GM12878 (cell line): ENCODE measurements at regions of chr17 and their contacts with region 1.

Region 1: DNA sequence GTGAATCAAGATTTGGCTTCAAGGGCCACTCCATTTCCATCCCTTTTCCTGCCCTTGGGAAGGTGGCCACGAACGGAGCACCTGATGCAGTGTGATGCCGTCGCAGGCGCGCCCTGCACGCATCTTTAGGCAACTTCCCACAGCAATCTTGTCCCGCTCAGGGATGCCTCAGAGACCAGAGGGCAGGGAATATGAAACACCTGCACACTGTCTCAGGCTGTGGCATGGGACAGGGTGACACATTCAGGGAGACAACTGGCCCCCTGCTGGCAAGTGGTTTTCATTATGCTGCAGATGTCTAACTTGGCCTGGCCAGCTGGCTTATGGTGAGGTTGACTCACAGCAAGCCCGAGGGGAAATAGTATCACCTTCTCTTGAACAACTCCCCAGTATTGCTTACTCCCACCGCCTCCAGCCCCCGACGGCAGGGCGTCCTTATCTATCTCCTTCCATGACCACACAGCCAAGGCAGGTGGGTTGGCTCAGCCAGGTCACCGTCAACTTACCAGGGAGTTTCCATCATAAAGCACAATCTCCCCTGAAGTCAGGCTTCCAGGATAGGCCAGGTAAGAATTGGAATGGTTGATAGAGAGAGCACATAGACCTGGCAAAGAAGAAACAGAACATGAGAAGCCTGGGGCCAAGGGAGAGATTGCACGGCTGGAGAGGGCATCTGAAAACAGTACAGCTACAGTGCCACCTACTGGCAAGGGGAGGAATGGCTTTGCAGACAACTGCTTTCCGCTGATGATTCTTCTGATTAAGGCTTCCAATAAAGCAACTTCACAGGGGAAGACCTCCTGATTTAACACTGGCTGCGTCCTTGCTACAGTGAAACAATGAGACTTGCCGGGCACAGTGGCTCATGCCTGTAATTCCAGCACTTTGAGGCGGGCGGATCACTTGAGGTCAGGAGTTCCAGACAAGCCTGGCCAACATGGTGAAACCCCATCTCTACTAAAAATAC is 21.1 kb downstream of the WIPI1 start:
- DNase-seq: no peak
- ATAC-seq: peak; percentile 83
- H3K4me3 ChIP-seq: no peak overlapping the region
- H3K27ac ChIP-seq: no peak overlapping the region
- H3K4me1 ChIP-seq: peaks cover 33% of the 10 kb centered on the region
- H3K27me3 ChIP-seq: no peaks in the 10 kb centered on the region
- CTCF ChIP-seq: peak; percentile 90 to 97 (median 96)
- EP300 ChIP-seq: no peak
- POLR2A ChIP-seq: no peak
- RAD21 ChIP-seq: peak; percentile 82

Region 2: DNA sequence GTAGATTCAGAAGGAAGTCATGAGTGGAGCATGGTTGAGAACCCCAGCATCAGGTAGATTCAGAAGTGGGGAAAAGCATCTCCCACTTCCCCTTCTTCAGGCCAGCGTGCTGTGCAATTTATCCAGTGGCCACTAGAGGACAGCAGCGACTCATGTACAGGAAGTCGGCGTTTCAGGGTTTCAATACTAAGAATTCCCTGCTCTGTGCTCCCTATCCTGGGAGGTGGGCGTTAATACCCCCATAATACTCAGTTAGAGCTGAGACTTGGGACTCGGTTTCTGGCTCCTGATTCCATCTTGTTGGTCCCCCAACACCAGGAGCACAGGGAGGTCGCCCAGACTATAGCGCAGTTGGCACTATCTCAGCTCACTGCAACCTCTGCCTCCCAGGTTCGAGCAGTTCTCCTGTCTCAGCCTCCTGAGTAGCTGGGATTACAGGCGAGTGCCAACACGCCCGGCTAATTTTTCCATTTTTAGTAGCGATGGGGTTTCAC is 263.7 kb before region 1 on chr17:
- CTCF ChIA-PET with region 1: interaction called, 15 read pairs
- POLR2A ChIA-PET with region 1: interaction called, 5 read pairs
- RAD21 ChIA-PET with region 1: interaction called, 7 read pairs
- SMC1A ChIA-PET with region 1: interaction called, 8 read pairs
- in situ Hi-C with region 1: no loop called
- intact Hi-C with region 1: loop called (anchors 2 kb)
- DNase-seq: no peak
- ATAC-seq: peak; percentile 90
- H3K4me3 ChIP-seq: no peak overlapping the region
- H3K27ac ChIP-seq: no peak overlapping the region
- H3K4me1 ChIP-seq: no peaks in the 10 kb centered on the region; the same call in 1 of the 2 replicates
- H3K27me3 ChIP-seq: no peaks in the 10 kb centered on the region
- CTCF ChIP-seq: peak; percentile 78 to 99 (median 96)
- EP300 ChIP-seq: no peak
- POLR2A ChIP-seq: no peak
- RAD21 ChIP-seq: peak; percentile 94

Region 3: DNA sequence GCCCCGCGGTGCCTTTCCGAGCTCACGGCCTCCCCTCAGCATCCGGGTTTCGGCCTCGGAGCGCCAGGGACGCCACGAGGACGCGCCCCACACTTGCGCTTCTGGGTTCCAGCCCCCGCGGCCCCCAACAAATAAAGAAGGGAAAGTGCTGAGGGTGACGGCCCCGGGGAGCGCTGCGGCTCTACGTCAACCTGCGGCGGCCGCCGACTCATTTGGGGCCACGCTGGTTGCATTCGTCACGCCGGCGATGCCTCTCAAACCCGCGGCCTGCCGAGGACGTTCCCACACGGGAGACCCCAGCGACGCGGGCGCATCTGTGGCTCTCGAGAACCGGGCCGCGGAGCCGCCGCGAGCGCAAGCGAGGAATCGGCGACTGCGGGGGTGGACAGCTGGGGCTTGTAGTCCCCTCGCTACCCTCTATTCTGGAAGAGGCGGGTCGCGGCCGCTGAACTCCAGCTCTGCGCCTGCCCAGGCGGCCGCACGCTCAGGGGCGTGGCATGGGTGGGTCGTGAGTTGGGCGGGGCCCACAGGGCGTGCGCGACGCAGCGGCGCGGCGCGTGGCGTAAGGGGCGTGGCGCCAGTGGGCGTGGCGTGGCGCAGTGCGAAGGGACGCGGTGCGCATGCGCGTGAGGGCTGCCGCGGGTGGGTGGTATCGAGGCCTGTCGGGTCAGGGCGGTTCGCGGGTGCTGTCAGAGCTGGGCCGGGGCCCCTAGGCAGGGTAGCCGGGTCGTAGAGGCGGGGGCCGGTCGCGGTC is 188.5 kb before region 1 on chr17 and contains the start of gene AMZ2:
- CTCF ChIA-PET with region 1: interaction called, 11 read pairs
- POLR2A ChIA-PET with region 1: no interaction called
- RAD21 ChIA-PET with region 1: interaction called, 4 read pairs
- SMC1A ChIA-PET with region 1: interaction called, 3 read pairs
- in situ Hi-C with region 1: no loop called
- intact Hi-C with region 1: no loop called
- DNase-seq: peak; percentile 81
- ATAC-seq: peak; percentile 92
- H3K4me3 ChIP-seq: peak within 1 kb of the TSS; percentile 85
- H3K27ac ChIP-seq: peak within 1 kb of the TSS; percentile 91
- H3K4me1 ChIP-seq: peaks cover 10% of the 10 kb centered on the region
- H3K27me3 ChIP-seq: no peaks in the 10 kb centered on the region
- CTCF ChIP-seq: no peak
- EP300 ChIP-seq: no peak
- POLR2A ChIP-seq: peak; percentile 95
- RAD21 ChIP-seq: no peak
- polyA plus RNA-seq, gene AMZ2: 127 to 135 TPM

Region 4: GRCh38 chr17:68291844-68292695 is 144.1 kb before region 1 on chr17:
- CTCF ChIA-PET with region 1: interaction called, 27 read pairs
- POLR2A ChIA-PET with region 1: interaction called, 3 read pairs
- RAD21 ChIA-PET with region 1: interaction called, 4 read pairs
- SMC1A ChIA-PET with region 1: interaction called, 5 read pairs
- in situ Hi-C with region 1: no loop called
- intact Hi-C with region 1: no loop called
- DNase-seq: peak; percentile 70
- ATAC-seq: peak; percentile 78
- H3K4me3 ChIP-seq: peak overlapping the region; percentile 74
- H3K27ac ChIP-seq: peak overlapping the region; percentile 95
- H3K4me1 ChIP-seq: peaks cover 22% of the 10 kb centered on the region
- H3K27me3 ChIP-seq: no peaks in the 10 kb centered on the region
- CTCF ChIP-seq: peak; percentile 0 to 24 (median 11); a peak in 2 of 6 replicates
- EP300 ChIP-seq: peak in 1 of 2 experiments; percentile 46; a peak in 1 of 4 replicates
- POLR2A ChIP-seq: peak; percentile 87
- RAD21 ChIP-seq: no peak

Region 5: DNA sequence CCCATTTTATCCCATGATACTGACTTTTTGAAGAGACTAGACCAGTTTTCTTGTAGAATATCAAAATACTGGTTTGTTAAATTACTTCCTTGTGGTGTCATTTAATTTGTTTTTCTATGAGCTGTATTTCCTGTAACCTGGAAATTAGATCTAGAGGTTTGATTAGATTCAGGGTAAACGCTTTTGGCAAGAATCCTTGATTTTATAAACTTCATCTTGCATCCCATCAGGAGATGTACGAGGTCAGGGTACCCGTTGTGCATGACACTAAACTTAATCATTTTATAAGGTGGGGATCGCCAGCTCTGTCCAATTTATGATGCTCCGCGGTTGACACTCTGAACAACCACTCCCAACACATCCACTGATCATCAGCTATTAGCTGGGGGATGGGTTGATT is 96.6 kb before region 1 on chr17:
- CTCF ChIA-PET with region 1: no interaction called
- POLR2A ChIA-PET with region 1: no interaction called
- RAD21 ChIA-PET with region 1: no interaction called
- SMC1A ChIA-PET with region 1: no interaction called
- in situ Hi-C with region 1: no loop called
- intact Hi-C with region 1: no loop called
- DNase-seq: no peak
- ATAC-seq: no peak
- H3K4me3 ChIP-seq: no peak overlapping the region
- H3K27ac ChIP-seq: no peak overlapping the region
- H3K4me1 ChIP-seq: no peaks in the 10 kb centered on the region
- H3K27me3 ChIP-seq: no peaks in the 10 kb centered on the region
- CTCF ChIP-seq: no peak
- EP300 ChIP-seq: no peak
- POLR2A ChIP-seq: no peak
- RAD21 ChIP-seq: no peak

Region 6: GRCh38 chr17:68418876-68419275 is 17.3 kb before region 1 on chr17:
- CTCF ChIA-PET with region 1: interaction called, 19 read pairs
- POLR2A ChIA-PET with region 1: interaction called, 3 read pairs
- RAD21 ChIA-PET with region 1: interaction called, 3 read pairs
- SMC1A ChIA-PET with region 1: interaction called, 4 read pairs
- in situ Hi-C with region 1: no loop called
- intact Hi-C with region 1: no loop called
- DNase-seq: no peak
- ATAC-seq: no peak
- H3K4me3 ChIP-seq: no peak overlapping the region
- H3K27ac ChIP-seq: no peak overlapping the region
- H3K4me1 ChIP-seq: no peaks in the 10 kb centered on the region
- H3K27me3 ChIP-seq: no peaks in the 10 kb centered on the region
- CTCF ChIP-seq: no peak
- EP300 ChIP-seq: no peak
- POLR2A ChIP-seq: no peak
- RAD21 ChIP-seq: no peak

Region 7: DNA sequence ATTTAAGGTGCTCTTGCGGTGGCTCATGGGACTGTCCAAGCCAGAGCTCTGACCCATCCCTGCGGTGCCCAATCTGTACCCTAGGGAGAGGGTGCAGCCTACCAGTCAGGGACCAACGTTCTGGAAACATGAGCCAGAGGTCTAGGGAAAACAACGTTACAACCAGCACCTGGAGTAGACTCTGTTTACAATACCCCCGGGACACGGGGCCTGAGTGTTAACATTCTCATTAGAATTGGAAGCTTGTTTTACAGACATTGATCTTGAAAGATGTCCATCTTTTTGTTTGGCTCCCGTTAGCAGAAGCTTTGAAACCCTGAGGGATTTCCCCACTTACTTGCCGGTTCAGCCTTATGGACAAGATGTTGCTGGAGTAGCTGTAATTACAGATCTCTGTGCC is 14.2 kb after region 1 on chr17:
- CTCF ChIA-PET with region 1: interaction called, 222 read pairs
- POLR2A ChIA-PET with region 1: interaction called, 10 read pairs
- RAD21 ChIA-PET with region 1: interaction called, 157 read pairs
- SMC1A ChIA-PET with region 1: interaction called, 288 read pairs
- in situ Hi-C with region 1: no loop called
- intact Hi-C with region 1: no loop called
- DNase-seq: no peak
- ATAC-seq: no peak
- H3K4me3 ChIP-seq: no peak overlapping the region
- H3K27ac ChIP-seq: no peak overlapping the region
- H3K4me1 ChIP-seq: no peaks in the 10 kb centered on the region
- H3K27me3 ChIP-seq: no peaks in the 10 kb centered on the region
- CTCF ChIP-seq: no peak
- EP300 ChIP-seq: no peak
- POLR2A ChIP-seq: no peak
- RAD21 ChIP-seq: no peak

Region 8: DNA sequence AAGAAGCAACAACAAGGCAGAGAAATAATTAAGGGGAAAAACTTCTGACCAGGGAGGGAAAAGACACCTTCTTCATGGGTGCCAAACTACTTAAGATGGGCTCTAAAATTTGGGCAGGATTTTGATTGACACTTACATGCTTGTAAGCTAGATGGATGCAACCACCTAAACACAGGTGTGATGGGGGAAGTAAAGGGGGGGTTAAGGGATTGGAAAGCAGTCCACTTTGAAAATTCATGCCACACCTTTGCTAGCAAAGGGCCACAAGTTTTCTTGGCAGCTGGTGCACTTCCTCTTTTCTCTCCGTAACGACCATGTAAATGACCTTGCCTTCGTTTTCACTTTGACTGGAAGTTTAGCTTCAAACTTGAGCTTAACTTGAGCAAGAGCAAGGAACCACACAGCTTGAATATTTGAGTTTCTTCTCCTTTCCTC is 61.7 kb after region 1 on chr17:
- CTCF ChIA-PET with region 1: no interaction called
- POLR2A ChIA-PET with region 1: interaction called, 3 read pairs
- RAD21 ChIA-PET with region 1: interaction called, 11 read pairs
- SMC1A ChIA-PET with region 1: interaction called, 4 read pairs
- in situ Hi-C with region 1: no loop called
- intact Hi-C with region 1: no loop called
- DNase-seq: peak; percentile 94
- ATAC-seq: peak; percentile 94
- H3K4me3 ChIP-seq: peak overlapping the region; percentile 18; the same call in 1 of the 2 replicates
- H3K27ac ChIP-seq: peak overlapping the region; percentile 82
- H3K4me1 ChIP-seq: peaks cover 26% of the 10 kb centered on the region
- H3K27me3 ChIP-seq: no peaks in the 10 kb centered on the region
- CTCF ChIP-seq: no peak
- EP300 ChIP-seq: peak; percentile 66 to 98
- POLR2A ChIP-seq: no peak
- RAD21 ChIP-seq: no peak

Region 9: DNA sequence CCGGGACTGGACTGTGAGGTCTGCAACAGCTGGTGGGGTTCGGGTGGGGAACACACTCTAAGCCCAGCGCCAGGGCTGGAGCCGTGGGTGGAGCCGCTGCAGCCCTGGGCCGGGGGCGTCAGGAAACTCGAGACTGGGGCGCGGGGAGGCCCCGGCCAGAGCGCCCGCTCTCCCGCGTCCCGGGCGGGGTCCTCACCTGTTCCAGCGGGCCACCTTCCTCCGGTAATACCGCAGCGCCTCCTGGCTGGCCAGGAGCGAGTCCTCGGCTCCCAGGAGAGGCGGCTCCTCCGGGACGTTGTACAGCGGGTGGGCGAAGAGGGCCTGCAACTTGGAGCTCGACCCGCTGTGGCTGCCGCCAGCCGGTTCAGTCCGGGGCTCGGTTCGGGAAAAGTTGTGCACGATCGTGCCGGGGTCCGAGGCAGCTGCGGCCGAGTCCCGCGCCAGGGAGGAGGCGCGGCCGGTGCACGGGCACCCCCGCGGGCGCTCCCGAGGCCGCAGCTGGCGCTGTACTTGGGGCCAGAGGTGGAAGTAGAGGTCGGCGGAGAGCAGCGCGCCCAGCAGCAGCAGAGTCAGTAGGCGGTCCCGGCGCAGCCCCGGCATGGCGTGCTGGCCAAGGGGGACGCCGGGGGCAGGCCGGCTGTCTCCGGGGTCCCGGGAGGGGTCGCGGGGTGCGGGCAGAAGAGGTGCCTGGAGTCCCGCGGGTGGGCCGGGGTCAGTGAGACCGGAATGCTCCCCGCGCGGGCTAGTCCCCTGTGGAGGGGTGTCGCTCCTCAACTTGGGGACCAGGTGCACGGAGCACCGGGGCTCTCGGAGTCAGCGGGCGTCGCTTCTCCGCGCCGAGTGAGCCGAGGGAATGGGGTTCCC is 164.1 kb after region 1 on chr17:
- CTCF ChIA-PET with region 1: no interaction called
- POLR2A ChIA-PET with region 1: no interaction called
- RAD21 ChIA-PET with region 1: no interaction called
- SMC1A ChIA-PET with region 1: no interaction called
- in situ Hi-C with region 1: no loop called
- intact Hi-C with region 1: no loop called
- DNase-seq: no peak
- ATAC-seq: no peak
- H3K4me3 ChIP-seq: no peak overlapping the region
- H3K27ac ChIP-seq: no peak overlapping the region
- H3K4me1 ChIP-seq: no peaks in the 10 kb centered on the region
- H3K27me3 ChIP-seq: peaks cover 3 to 18% of the 10 kb centered on the region in 2 experiments
- CTCF ChIP-seq: no peak
- EP300 ChIP-seq: no peak
- POLR2A ChIP-seq: no peak
- RAD21 ChIP-seq: no peak